Endothelial cell of umbilical vein (primary cell): ENCODE measurements at regions of chr15 and their contacts with region 1.

Region 1: DNA sequence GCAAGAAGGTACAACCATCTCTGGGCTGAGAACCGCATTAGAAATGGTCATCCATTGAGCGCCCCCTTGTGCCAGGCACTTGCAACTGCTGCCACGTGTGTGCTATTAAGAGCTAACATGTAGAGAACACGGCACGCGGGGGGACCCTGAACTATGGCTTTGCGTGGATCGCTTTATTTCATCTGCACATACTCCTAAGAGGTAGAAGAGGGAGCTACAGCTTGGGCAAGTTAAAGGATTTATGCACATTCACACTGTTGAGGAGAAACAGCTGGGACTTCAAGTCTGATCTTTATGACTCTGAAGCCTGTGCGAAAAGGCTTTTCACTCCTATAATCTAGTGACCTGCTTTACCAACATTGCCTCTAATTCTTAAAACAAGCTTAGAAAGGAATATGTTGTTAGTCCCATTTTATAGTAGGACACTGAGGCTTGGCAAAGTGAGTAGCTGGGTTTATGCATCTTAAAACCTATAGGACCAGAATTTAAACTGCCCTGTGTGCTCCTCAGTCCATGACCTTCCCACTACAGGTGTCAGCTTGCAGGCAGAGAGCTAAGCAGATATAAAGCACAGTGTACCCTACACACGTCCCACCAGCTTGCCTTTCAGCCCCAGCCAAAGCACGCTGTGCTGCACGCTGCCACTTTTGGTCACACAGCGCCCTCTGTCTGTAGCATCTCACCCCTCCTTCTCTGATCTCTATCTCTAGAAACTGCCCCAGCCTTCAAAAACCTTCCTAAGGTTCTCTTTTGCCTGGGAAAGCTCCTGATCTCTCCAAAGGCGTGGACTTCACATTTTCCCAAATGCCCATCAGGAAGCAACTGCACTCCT is 57.8 kb downstream of the STARD5 start:
- DNase-seq: peak; percentile 80
- H3K4me3 ChIP-seq: no peak overlapping the region
- H3K27ac ChIP-seq: no peak overlapping the region
- H3K4me1 ChIP-seq: peaks cover 5% of the 10 kb centered on the region
- H3K27me3 ChIP-seq: peaks cover 0 to 2% of the 10 kb centered on the region in 2 experiments
- CTCF ChIP-seq: peak; percentile 93 to 94
- POLR2A ChIP-seq: no peak

Region 2: DNA sequence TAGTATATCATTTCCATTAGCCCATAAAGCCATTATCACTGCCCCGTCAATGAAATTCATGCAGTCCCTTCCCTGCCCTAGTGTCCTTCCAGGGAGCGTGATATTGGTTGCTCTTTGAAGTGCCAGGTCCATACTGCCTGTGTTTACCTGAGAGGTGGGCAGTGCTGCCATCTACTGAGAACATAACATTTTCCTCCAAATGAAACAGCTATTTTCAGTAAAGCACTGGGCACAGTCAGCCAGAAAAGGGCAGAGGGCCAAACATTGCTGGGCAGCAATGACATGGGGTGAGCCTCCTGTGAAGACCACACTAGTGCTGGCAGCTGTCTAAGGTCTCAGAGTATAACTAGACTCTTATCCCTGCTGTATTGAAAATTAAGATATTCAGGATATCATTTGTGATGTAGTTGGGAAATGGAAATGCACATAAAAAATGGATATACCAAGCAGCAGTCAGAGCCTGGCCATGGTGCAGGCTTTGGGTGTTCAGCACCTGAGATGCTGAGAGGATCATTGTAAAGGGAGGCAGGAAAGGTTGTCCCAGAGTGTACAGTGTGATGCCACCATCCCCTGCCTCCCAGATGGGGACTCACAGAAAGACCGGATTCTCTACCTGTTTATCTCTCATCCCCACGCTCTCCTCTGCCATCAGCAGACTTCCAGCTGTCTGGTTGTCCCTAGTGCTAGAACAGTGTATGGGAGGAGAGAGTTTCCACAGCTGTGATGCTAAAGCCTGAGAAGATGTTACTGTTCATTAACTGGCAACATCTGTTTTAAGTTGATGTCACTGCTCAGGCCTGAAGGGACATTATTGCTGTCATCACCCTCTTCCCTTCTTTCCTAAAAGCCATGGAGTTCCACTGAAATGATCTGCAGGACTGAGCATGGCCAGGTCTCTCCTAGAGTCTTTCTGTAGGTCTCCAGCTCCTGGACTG is 753.2 kb before region 1 on chr15:
- CTCF ChIA-PET with region 1: no interaction called
- POLR2A ChIA-PET with region 1: no interaction called
- dilution Hi-C with region 1: no loop called
- intact Hi-C with region 1: no loop called
- DNase-seq: no peak
- H3K4me3 ChIP-seq: no peak overlapping the region
- H3K27ac ChIP-seq: no peak overlapping the region
- H3K4me1 ChIP-seq: no peaks in the 10 kb centered on the region
- H3K27me3 ChIP-seq: no peaks in the 10 kb centered on the region
- CTCF ChIP-seq: no peak
- POLR2A ChIP-seq: no peak

Region 3: GRCh38 chr15:80783260-80783659 is 482.9 kb before region 1 on chr15:
- CTCF ChIA-PET with region 1: interaction called, 68 read pairs
- POLR2A ChIA-PET with region 1: no interaction called
- dilution Hi-C with region 1: no loop called
- intact Hi-C with region 1: loop called (anchors 1 kb)
- DNase-seq: no peak
- H3K4me3 ChIP-seq: no peak overlapping the region
- H3K27ac ChIP-seq: no peak overlapping the region
- H3K4me1 ChIP-seq: peaks cover 12% of the 10 kb centered on the region
- H3K27me3 ChIP-seq: peaks cover 17 to 23% of the 10 kb centered on the region in 2 experiments
- CTCF ChIP-seq: no peak
- POLR2A ChIP-seq: no peak

Region 4: DNA sequence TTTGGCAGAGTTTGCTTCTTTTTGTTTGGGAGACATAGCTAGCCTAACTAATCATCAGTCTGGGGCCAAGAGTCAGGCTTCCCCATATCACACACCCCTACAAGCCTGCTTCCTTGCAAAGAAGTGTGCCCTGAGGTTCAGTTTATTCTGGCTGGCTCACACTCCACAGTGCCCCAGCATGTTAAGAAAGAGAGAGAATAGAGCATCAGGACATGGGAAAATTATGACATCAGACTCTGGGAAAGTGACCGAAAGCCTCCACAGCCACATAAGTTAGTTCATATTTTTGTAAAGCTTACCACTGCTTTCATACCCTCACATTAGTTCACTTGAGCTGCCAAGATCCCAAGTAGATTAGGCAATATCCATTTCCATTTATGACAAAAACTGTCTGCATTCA is 195.0 kb before region 1 on chr15:
- CTCF ChIA-PET with region 1: interaction called, 12 read pairs
- POLR2A ChIA-PET with region 1: no interaction called
- dilution Hi-C with region 1: no loop called
- intact Hi-C with region 1: no loop called
- DNase-seq: peak; percentile 85
- H3K4me3 ChIP-seq: no peak overlapping the region
- H3K27ac ChIP-seq: no peak overlapping the region
- H3K4me1 ChIP-seq: peaks cover 16% of the 10 kb centered on the region
- H3K27me3 ChIP-seq: no peaks in the 10 kb centered on the region
- CTCF ChIP-seq: no peak
- POLR2A ChIP-seq: no peak

Region 5: GRCh38 chr15:81117136-81117535 is 149.0 kb before region 1 on chr15:
- CTCF ChIA-PET with region 1: interaction called, 50 read pairs
- POLR2A ChIA-PET with region 1: no interaction called
- dilution Hi-C with region 1: no loop called
- intact Hi-C with region 1: no loop called
- DNase-seq: no peak
- H3K4me3 ChIP-seq: no peak overlapping the region
- H3K27ac ChIP-seq: no peak overlapping the region
- H3K4me1 ChIP-seq: peaks cover 10% of the 10 kb centered on the region
- H3K27me3 ChIP-seq: peaks cover 0 to 7% of the 10 kb centered on the region in 2 experiments
- CTCF ChIP-seq: no peak
- POLR2A ChIP-seq: no peak

Region 6: GRCh38 chr15:81174792-81175327 is 91.3 kb before region 1 on chr15:
- CTCF ChIA-PET with region 1: interaction called, 15 read pairs
- POLR2A ChIA-PET with region 1: no interaction called
- dilution Hi-C with region 1: no loop called
- intact Hi-C with region 1: no loop called
- DNase-seq: no peak
- H3K4me3 ChIP-seq: no peak overlapping the region
- H3K27ac ChIP-seq: no peak overlapping the region
- H3K4me1 ChIP-seq: no peaks in the 10 kb centered on the region
- H3K27me3 ChIP-seq: peaks cover 0 to 5% of the 10 kb centered on the region in 2 experiments
- CTCF ChIP-seq: no peak
- POLR2A ChIP-seq: no peak

Region 7: DNA sequence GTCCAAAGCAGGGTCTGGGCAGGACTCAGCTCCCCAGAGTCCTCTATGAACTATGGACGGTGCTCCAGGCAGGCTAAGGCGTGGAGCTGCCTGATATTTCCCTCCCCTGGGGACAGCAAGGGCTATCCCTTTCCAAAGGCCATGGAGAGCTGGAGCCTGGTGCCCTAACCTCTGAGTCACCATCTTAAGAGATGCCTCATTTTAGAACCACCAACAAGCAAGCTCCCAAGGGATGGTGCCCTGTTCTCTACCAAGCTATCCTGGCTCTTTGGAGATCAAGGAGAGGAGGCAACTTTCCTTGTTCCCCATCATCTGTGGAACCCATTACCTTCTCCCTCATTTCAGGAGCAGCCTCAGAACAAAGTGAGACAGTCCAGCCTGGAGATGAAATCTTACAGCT is 42.1 kb after region 1 on chr15:
- CTCF ChIA-PET with region 1: interaction called, 12 read pairs
- POLR2A ChIA-PET with region 1: no interaction called
- dilution Hi-C with region 1: no loop called
- intact Hi-C with region 1: no loop called
- DNase-seq: no peak
- H3K4me3 ChIP-seq: no peak overlapping the region
- H3K27ac ChIP-seq: no peak overlapping the region
- H3K4me1 ChIP-seq: no peaks in the 10 kb centered on the region
- H3K27me3 ChIP-seq: no peaks in the 10 kb centered on the region
- CTCF ChIP-seq: no peak
- POLR2A ChIP-seq: no peak

Region 8: DNA sequence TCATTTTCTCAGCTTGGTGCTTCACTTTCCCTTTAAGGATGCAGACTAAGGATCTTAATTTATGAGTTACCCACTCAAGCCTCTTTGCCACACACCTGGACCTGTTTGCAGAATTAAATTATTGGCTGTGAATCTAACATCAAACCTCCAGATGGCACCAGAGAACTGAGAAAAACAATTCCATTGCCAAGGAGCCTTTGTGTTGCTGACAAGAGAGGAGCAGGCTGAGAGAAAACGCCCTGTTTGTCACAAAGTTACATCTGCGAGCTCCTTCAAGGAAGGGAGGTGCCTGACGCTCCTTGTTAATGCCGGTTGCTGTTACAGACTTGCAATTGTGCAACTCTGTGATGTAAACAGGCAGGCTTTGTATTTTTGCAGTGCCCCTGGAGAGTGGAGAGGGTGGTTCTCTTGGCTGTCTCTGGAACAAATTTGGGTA is 144.2 kb after region 1 on chr15:
- CTCF ChIA-PET with region 1: interaction called, 11 read pairs
- POLR2A ChIA-PET with region 1: no interaction called
- dilution Hi-C with region 1: no loop called
- intact Hi-C with region 1: no loop called
- DNase-seq: peak; percentile 74
- H3K4me3 ChIP-seq: no peak overlapping the region
- H3K27ac ChIP-seq: no peak overlapping the region
- H3K4me1 ChIP-seq: no peaks in the 10 kb centered on the region
- H3K27me3 ChIP-seq: peaks cover 0 to 2% of the 10 kb centered on the region in 2 experiments
- CTCF ChIP-seq: peak; percentile 28 to 32
- POLR2A ChIP-seq: no peak